B cell (primary cell): ENCODE measurements at regions of chr10 and their contacts with region 1.

Region 1: DNA sequence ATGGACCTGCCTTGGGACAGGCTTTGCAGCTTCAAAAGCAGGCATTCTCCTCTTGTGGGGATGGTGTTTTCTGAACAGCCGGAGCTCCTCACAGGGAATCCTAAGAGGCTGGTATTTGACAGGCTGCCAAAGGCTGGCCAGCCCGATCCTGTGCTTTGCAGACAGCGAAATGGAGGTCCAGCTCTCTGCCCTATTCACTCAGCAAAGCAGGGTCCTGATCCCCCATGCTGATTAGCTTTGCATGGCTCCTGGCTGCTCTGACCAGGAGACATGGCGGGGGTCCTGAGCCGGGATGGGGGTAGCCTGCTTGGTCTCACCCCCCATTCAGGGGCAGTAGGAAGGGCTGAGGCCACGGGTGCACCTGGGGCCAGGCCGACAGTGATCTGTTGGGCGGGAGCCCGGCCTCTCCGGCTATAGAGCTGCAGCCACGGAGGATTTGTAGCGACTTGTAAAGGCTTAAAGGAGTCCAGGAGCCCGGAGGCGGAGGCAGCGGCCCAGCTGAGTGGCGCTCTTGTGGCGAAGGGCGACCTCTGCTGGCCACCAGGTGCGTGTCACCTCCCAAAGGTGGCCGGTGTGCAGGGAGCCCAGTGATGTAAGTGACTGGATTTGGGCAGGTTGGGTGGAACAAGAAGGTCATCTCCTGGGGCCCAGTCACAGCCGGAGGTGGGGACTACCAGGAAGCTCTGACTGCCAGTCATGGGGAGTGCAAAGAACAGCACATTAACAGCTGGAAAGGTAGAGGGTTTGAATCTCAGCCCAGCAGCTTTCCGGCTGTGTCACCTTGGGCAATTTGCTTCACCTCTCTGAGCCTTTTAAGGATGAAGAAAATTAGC is 126.5 kb downstream of the ZMIZ1 start:
- DNase-seq: peak; percentile 80
- ATAC-seq: peak; percentile 71
- H3K4me3 ChIP-seq: no peak overlapping the region
- H3K4me3 Mint-ChIP-seq: no peak overlapping the region
- H3K27ac ChIP-seq: no peak overlapping the region
- H3K27ac Mint-ChIP-seq: peak overlapping the region; percentile 56
- H3K4me1 ChIP-seq: peaks cover 14 to 17% of the 10 kb centered on the region in 2 donors
- H3K4me1 Mint-ChIP-seq: peaks cover 17% of the 10 kb centered on the region
- H3K27me3 ChIP-seq: peaks cover 0 to 12% (median 4%) of the 10 kb centered on the region in 4 experiments
- H3K27me3 Mint-ChIP-seq: peaks cover 11% of the 10 kb centered on the region
- CTCF ChIP-seq: peak; percentile 96

Region 2: GRCh38 chr10:77846718-77847630 is 1348.3 kb before region 1 on chr10:
- CTCF ChIA-PET with region 1: interaction called, 11 read pairs
- POLR2A ChIA-PET with region 1: no interaction called
- intact Hi-C with region 1: no loop called
- DNase-seq: peak; percentile 66
- ATAC-seq: peak; percentile 75
- H3K4me3 ChIP-seq: no peak overlapping the region
- H3K4me3 Mint-ChIP-seq: no peak overlapping the region
- H3K27ac ChIP-seq: no peak overlapping the region
- H3K27ac Mint-ChIP-seq: no peak overlapping the region
- H3K4me1 ChIP-seq: peaks cover 0 to 12% of the 10 kb centered on the region in 2 donors
- H3K4me1 Mint-ChIP-seq: peaks cover 8% of the 10 kb centered on the region
- H3K27me3 ChIP-seq: no peaks in the 10 kb centered on the region
- H3K27me3 Mint-ChIP-seq: no peaks in the 10 kb centered on the region
- CTCF ChIP-seq: peak; percentile 96

Region 3: GRCh38 chr10:78047314-78047891 is 1147.9 kb before region 1 on chr10:
- CTCF ChIA-PET with region 1: interaction called, 148 read pairs
- POLR2A ChIA-PET with region 1: no interaction called
- intact Hi-C with region 1: loop called (anchors 1 kb)
- DNase-seq: peak; percentile 79
- ATAC-seq: peak; percentile 76
- H3K4me3 ChIP-seq: no peak overlapping the region
- H3K4me3 Mint-ChIP-seq: no peak overlapping the region
- H3K27ac ChIP-seq: no peak overlapping the region
- H3K27ac Mint-ChIP-seq: no peak overlapping the region
- H3K4me1 ChIP-seq: peaks cover 0 to 17% of the 10 kb centered on the region in 2 donors
- H3K4me1 Mint-ChIP-seq: peaks cover 16% of the 10 kb centered on the region
- H3K27me3 ChIP-seq: no peaks in the 10 kb centered on the region
- H3K27me3 Mint-ChIP-seq: no peaks in the 10 kb centered on the region
- CTCF ChIP-seq: peak; percentile 90

Region 4: DNA sequence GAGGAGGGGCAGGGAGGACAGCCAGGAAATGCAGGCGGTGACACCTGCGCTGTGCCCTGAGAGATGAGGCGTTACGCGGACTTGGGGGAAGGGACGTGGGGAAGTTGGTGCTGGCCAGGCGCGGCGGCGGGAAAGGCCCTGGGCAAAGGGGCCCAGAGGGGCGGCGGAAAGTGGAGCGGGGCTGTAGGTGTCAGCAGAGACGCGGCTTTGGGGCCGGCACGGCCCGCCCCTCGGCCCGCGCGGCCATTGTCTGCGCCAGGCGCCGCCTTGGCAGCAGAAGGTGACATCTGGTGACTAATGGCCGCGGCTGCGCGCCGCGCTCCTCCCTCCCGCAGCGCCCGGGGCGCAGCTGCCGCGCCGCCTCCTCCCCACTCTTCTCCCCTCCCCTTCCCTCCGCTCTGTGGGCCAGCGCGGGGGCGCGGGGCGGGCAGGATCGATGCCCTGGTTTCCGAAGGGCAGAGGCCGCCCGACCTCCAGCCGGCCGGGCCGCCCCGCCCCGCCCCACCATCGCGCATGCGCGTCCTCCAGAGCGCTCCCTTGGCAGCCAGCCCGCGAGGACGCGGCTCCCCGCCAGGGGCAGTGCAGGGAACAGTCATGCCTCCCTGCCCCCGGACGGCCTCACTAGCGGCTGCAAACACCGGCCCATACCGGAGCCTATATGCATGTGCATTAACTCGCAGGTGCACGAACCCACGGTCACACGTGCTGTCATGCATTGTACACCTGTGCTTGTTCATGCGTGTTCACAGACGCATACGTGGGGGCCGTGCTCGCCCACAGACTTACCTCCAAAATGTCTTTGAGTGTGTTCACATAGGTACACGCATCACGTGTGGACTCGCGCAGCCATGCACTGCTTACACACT is 892.1 kb before region 1 on chr10:
- CTCF ChIA-PET with region 1: interaction called, 6 read pairs
- POLR2A ChIA-PET with region 1: no interaction called
- intact Hi-C with region 1: loop called (anchors 10 kb)
- DNase-seq: peak; percentile 98
- ATAC-seq: peak; percentile 86
- H3K4me3 ChIP-seq: peak overlapping the region; percentile 59 to 81 (median 66)
- H3K4me3 Mint-ChIP-seq: peak overlapping the region; percentile 97
- H3K27ac ChIP-seq: peak overlapping the region; percentile 80 to 93
- H3K27ac Mint-ChIP-seq: peak overlapping the region; percentile 98
- H3K4me1 ChIP-seq: peaks cover 32 to 48% of the 10 kb centered on the region in 2 donors
- H3K4me1 Mint-ChIP-seq: peaks cover 45% of the 10 kb centered on the region
- H3K27me3 ChIP-seq: no peaks in the 10 kb centered on the region
- H3K27me3 Mint-ChIP-seq: no peaks in the 10 kb centered on the region
- CTCF ChIP-seq: peak; percentile 85

Region 5: GRCh38 chr10:78937800-78938694 is 257.3 kb before region 1 on chr10:
- CTCF ChIA-PET with region 1: interaction called, 11 read pairs
- POLR2A ChIA-PET with region 1: no interaction called
- intact Hi-C with region 1: loop called (anchors 5 kb)
- DNase-seq: no peak
- ATAC-seq: no peak
- H3K4me3 ChIP-seq: no peak overlapping the region
- H3K4me3 Mint-ChIP-seq: no peak overlapping the region
- H3K27ac ChIP-seq: no peak overlapping the region
- H3K27ac Mint-ChIP-seq: no peak overlapping the region
- H3K4me1 ChIP-seq: no peaks in the 10 kb centered on the region
- H3K4me1 Mint-ChIP-seq: no peaks in the 10 kb centered on the region
- H3K27me3 ChIP-seq: peaks cover 0 to 5% (median 2%) of the 10 kb centered on the region in 4 experiments
- H3K27me3 Mint-ChIP-seq: peaks cover 33% of the 10 kb centered on the region
- CTCF ChIP-seq: no peak

Region 6: DNA sequence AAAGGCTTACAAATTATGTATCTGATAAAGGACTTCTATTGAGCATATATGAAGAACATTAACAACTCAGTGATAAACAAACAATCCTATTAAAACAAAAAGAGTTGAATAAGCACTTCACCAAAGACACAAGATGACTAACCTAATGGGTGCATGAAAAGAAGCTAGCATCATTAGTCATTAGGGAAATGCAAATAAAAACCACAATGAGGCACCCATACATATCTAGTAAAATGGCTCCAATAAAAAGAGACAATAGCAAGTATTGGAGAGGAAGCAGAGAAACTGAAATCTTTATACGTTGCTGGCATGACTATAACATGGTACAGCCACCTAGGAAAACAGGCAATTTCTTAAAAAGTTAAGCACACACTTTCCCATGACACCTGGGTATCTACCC is 204.1 kb before region 1 on chr10:
- CTCF ChIA-PET with region 1: no interaction called
- POLR2A ChIA-PET with region 1: no interaction called
- intact Hi-C with region 1: no loop called
- DNase-seq: peak; percentile 22
- ATAC-seq: peak; percentile 56
- H3K4me3 ChIP-seq: no peak overlapping the region
- H3K4me3 Mint-ChIP-seq: no peak overlapping the region
- H3K27ac ChIP-seq: no peak overlapping the region
- H3K27ac Mint-ChIP-seq: no peak overlapping the region
- H3K4me1 ChIP-seq: peaks cover 18 to 21% of the 10 kb centered on the region in 2 donors
- H3K4me1 Mint-ChIP-seq: peaks cover 29% of the 10 kb centered on the region
- H3K27me3 ChIP-seq: peaks cover 0 to 17% (median 11%) of the 10 kb centered on the region in 4 experiments
- H3K27me3 Mint-ChIP-seq: peaks cover 39% of the 10 kb centered on the region
- CTCF ChIP-seq: no peak

Region 7: GRCh38 chr10:79184145-79184625 is 11.1 kb before region 1 on chr10:
- CTCF ChIA-PET with region 1: interaction called, 11 read pairs
- POLR2A ChIA-PET with region 1: no interaction called
- intact Hi-C with region 1: no loop called
- DNase-seq: no peak
- ATAC-seq: no peak
- H3K4me3 ChIP-seq: no peak overlapping the region
- H3K4me3 Mint-ChIP-seq: no peak overlapping the region
- H3K27ac ChIP-seq: no peak overlapping the region
- H3K27ac Mint-ChIP-seq: no peak overlapping the region
- H3K4me1 ChIP-seq: no peaks in the 10 kb centered on the region
- H3K4me1 Mint-ChIP-seq: no peaks in the 10 kb centered on the region
- H3K27me3 ChIP-seq: peaks cover 0 to 8% (median 0%) of the 10 kb centered on the region in 4 experiments
- H3K27me3 Mint-ChIP-seq: peaks cover 16% of the 10 kb centered on the region
- CTCF ChIP-seq: no peak

Region 8: GRCh38 chr10:79286318-79286951 is 91.1 kb after region 1 on chr10:
- CTCF ChIA-PET with region 1: interaction called, 9 read pairs
- POLR2A ChIA-PET with region 1: no interaction called
- intact Hi-C with region 1: loop called (anchors 1 kb)
- DNase-seq: peak; percentile 93
- ATAC-seq: peak; percentile 92
- H3K4me3 ChIP-seq: peak overlapping the region in 4 of 5 experiments; percentile 1 to 40 (median 23)
- H3K4me3 Mint-ChIP-seq: peak overlapping the region; percentile 84
- H3K27ac ChIP-seq: peak overlapping the region; percentile 80 to 88
- H3K27ac Mint-ChIP-seq: peak overlapping the region; percentile 97
- H3K4me1 ChIP-seq: peaks cover 52 to 66% of the 10 kb centered on the region in 2 donors
- H3K4me1 Mint-ChIP-seq: peaks cover 79% of the 10 kb centered on the region
- H3K27me3 ChIP-seq: no peaks in the 10 kb centered on the region
- H3K27me3 Mint-ChIP-seq: no peaks in the 10 kb centered on the region
- CTCF ChIP-seq: no peak